OCI-LY7 (cell line): ENCODE measurements at regions of chr12 and their contacts with region 1.

Region 1: DNA sequence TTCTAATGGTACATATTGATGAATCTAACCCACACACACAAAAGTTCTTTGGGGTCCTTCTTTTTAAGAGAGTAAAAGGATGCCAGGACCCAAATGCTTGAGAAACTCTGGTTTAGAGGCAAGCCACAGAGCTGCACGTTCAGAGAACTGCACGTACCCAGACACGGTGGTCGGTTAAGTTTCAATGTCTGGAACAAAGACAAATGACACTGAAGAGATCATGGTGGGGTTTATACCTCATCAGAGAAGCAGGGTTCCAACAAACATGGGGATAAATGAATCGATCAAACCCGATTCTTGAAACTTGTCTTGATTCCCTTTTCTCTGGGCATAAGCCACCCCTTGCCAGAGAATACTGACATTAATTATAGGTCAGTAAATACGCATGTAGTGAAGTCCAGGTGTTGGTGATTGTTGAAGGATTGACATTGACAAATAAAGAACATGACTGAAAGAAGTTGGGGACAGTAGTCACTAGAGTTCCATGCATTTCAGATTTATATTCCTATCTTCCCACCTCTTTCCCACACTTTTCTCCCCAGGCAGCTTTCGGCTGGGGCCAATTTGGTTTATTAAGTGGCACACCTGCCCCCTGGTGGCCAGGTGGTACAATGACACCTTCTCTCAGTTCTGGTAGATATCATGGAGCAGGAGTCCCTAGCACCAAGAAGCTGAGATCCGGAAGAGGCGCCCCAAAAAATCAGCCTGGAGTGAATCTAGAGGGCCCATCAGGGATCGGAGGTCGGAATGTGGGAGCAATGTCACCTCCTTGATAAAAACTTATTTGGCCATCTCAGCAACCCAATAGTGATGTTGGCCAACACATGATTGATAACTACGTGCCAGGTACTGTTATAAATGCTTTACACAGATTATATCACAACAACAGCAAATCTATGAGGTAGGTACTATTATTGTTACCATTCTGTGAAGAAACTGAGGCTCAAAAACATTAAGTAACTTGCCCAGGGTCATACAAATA is 17.8 kb upstream of the HDAC7 start:
- DNase-seq: peak; percentile 76
- H3K4me3 ChIP-seq: peak overlapping the region; percentile 31
- H3K27ac ChIP-seq: peak overlapping the region; percentile 93
- H3K4me1 ChIP-seq: peaks cover 60% of the 10 kb centered on the region
- CTCF ChIP-seq: peak; percentile 97

Region 2: DNA sequence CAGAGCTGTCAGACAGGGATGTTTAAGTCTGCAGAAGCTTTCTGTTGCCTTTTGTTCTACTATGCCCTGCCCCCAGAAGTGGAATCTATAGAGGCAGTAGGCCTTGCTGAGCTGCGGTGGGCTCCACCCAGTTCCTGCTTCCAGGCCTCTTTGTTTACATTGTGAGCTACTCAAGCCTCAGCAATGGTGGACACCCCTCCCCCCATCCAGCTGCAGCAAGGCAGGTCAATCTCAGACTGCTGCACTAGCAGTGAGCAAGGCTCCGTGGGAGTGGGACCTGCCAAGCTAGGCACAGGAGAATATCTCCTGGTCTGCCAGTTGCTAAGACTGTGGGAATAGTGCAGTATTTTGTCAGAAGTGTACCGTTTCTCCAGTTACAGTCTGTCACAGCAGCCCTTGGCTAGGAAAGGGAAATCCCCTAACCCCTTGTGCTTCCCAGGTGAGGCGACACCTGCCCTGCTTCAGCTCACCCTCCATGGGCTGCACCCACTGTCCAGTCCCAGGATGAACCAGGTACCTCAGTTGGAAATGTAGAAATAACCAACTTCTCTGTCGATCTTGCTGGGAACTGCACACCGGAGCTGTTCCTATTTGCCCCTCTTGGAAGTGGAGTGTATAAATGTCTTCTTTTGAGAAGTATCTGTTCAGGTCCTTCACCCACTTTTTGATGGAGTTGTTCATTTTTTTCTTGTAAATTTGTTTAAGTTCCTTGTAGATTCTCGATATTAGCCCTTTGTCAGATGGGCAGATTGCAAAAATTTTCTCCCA is 1251.4 kb before region 1 on chr12:
- CTCF ChIA-PET with region 1: no interaction called
- POLR2A ChIA-PET with region 1: no interaction called
- intact Hi-C with region 1: no loop called
- DNase-seq: peak; percentile 4
- H3K4me3 ChIP-seq: no peak overlapping the region
- H3K27ac ChIP-seq: no peak overlapping the region
- H3K4me1 ChIP-seq: no peaks in the 10 kb centered on the region
- CTCF ChIP-seq: no peak

Region 3: DNA sequence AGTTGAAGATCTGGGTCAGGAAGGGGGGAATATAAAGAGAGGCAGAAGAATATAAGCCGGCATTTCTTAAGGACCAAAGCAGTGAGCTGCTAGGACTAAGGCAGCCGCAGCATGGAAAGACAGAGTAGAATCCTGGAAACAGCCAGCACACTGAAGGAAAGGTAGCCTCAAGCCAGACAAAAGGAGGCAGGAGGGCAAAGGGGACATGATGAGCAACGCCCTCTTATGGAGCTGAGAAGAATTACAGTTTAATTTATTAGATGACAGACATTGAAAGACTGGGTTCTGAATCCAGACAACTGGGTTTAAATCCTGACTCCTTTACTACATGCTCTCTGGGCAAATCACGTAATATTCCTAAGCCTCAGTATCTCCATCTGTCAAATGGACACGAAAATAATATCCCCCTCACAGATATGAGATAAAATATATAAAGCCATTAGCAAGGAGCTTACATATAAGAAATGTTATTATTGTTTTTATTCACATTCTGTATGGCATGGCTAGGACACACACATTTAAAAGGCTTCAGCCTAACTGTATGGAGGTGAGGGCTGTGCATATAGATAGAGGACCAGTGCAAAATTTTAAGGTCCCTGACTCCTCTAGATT is 766.1 kb before region 1 on chr12:
- CTCF ChIA-PET with region 1: no interaction called
- POLR2A ChIA-PET with region 1: no interaction called
- intact Hi-C with region 1: no loop called
- DNase-seq: peak; percentile 37
- H3K4me3 ChIP-seq: no peak overlapping the region
- H3K27ac ChIP-seq: no peak overlapping the region
- H3K4me1 ChIP-seq: no peaks in the 10 kb centered on the region
- CTCF ChIP-seq: peak; percentile 82

Region 4: GRCh38 chr12:47343677-47344567 is 493.6 kb before region 1 on chr12:
- CTCF ChIA-PET with region 1: no interaction called
- POLR2A ChIA-PET with region 1: no interaction called
- intact Hi-C with region 1: no loop called
- DNase-seq: no peak
- H3K4me3 ChIP-seq: no peak overlapping the region
- H3K27ac ChIP-seq: no peak overlapping the region
- H3K4me1 ChIP-seq: no peaks in the 10 kb centered on the region
- CTCF ChIP-seq: no peak

Region 5: GRCh38 chr12:47715393-47715876 is 122.0 kb before region 1 on chr12:
- CTCF ChIA-PET with region 1: interaction called, 4 read pairs
- POLR2A ChIA-PET with region 1: no interaction called
- intact Hi-C with region 1: loop called (anchors 1 kb)
- DNase-seq: peak; percentile 91
- H3K4me3 ChIP-seq: no peak overlapping the region
- H3K27ac ChIP-seq: no peak overlapping the region
- H3K4me1 ChIP-seq: peaks cover 20% of the 10 kb centered on the region
- CTCF ChIP-seq: peak; percentile 93

Region 6: DNA sequence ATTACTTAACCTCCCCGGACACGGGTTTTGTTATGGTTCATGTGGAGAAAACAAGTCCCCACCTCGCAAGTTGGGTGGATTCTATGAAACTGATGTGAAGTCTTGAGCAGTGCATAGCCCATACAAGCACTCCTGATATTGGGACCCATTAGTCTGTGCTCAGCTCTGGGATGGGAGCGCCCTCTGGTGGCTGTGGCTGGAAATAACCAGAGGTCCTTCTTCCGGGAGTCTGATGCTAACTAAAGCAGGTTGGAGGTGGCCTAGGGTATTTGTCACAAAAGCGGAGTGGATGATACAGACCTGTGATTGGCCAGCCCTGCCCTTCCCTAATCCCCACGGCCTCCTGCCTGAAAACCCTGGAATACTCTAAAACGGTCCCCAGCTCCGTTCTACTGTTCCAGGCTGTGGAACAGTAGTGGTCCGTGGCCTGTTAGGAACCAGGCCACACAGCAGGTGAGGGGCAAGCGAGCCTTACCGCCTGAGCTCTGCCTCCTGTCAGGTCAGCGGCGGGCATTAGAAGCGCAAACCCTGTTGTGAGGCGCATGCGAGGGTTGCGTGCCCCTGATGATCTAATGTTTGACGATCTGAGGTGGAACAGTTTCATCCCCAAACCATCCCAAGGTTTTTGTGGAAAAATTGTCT is 58.1 kb before region 1 on chr12:
- CTCF ChIA-PET with region 1: interaction called, 13 read pairs
- POLR2A ChIA-PET with region 1: interaction called, 5 read pairs
- intact Hi-C with region 1: loop called (anchors 1 kb)
- DNase-seq: peak; percentile 89
- H3K4me3 ChIP-seq: no peak overlapping the region
- H3K27ac ChIP-seq: no peak overlapping the region
- H3K4me1 ChIP-seq: peaks cover 42% of the 10 kb centered on the region
- CTCF ChIP-seq: peak; percentile 97

Region 7: GRCh38 chr12:47812797-47813510 is 24.5 kb before region 1 on chr12:
- CTCF ChIA-PET with region 1: interaction called, 133 read pairs
- POLR2A ChIA-PET with region 1: interaction called, 342 read pairs
- intact Hi-C with region 1: loop called (anchors 1 kb)
- DNase-seq: peak; percentile 96
- H3K4me3 ChIP-seq: peak overlapping the region; percentile 66
- H3K27ac ChIP-seq: peak overlapping the region; percentile 96
- H3K4me1 ChIP-seq: peaks cover 98% of the 10 kb centered on the region
- CTCF ChIP-seq: peak; percentile 36; the same call in 1 of the 2 replicates

Region 8: GRCh38 chr12:47825239-47825639 is 12.2 kb before region 1 on chr12:
- CTCF ChIA-PET with region 1: interaction called, 85 read pairs
- POLR2A ChIA-PET with region 1: interaction called, 239 read pairs
- intact Hi-C with region 1: no loop called
- DNase-seq: no peak
- H3K4me3 ChIP-seq: no peak overlapping the region
- H3K27ac ChIP-seq: no peak overlapping the region
- H3K4me1 ChIP-seq: peaks cover 75% of the 10 kb centered on the region
- CTCF ChIP-seq: no peak

Region 9: DNA sequence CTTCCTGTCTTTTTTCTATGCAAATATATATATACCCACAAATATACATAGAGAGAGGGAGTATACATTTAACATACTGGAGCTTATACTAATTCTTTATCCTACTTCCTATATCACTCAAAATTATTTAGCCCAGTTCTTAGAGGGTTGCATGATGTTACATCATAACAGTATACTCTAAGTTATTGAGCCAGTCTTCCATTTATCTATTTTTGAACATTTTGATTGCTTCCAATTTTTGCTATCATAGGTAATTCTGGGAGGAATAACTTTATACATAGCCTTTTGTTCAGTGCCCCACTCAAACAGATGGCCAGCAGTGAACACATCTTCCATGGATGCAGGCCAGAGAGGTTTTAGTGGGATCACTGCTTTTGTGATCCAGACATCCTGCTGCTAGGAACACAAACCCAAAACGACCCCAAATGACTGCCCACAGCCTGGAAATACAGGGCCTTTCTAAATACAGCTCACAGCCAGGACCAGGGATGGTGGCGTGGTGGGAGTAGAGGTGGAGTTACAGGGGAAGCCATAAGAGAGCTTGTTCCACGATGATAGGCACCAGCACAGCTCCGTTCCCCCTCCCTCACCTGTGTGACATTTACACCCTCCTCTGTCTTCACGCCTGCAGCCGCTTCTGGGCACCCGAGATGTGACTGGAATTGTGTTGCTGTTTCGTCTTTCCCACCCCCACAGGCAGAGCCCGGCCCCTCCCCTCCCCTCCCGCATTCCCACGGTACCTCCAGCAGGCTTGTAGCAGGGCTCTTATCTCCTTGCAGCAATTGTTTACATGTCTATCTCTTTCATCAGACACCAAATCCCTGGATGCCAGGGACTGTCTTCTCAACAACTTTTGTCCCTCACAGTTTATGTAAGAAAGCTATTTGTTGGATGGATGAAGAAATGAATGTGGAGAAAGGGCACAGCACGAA is 12.9 kb after region 1 on chr12:
- CTCF ChIA-PET with region 1: no interaction called
- POLR2A ChIA-PET with region 1: no interaction called
- intact Hi-C with region 1: no loop called
- DNase-seq: no peak
- H3K4me3 ChIP-seq: no peak overlapping the region
- H3K27ac ChIP-seq: no peak overlapping the region
- H3K4me1 ChIP-seq: no peaks in the 10 kb centered on the region
- CTCF ChIP-seq: no peak